ENCODE measurements at regions of chr12 and their contacts with region 1.

Region 1: DNA sequence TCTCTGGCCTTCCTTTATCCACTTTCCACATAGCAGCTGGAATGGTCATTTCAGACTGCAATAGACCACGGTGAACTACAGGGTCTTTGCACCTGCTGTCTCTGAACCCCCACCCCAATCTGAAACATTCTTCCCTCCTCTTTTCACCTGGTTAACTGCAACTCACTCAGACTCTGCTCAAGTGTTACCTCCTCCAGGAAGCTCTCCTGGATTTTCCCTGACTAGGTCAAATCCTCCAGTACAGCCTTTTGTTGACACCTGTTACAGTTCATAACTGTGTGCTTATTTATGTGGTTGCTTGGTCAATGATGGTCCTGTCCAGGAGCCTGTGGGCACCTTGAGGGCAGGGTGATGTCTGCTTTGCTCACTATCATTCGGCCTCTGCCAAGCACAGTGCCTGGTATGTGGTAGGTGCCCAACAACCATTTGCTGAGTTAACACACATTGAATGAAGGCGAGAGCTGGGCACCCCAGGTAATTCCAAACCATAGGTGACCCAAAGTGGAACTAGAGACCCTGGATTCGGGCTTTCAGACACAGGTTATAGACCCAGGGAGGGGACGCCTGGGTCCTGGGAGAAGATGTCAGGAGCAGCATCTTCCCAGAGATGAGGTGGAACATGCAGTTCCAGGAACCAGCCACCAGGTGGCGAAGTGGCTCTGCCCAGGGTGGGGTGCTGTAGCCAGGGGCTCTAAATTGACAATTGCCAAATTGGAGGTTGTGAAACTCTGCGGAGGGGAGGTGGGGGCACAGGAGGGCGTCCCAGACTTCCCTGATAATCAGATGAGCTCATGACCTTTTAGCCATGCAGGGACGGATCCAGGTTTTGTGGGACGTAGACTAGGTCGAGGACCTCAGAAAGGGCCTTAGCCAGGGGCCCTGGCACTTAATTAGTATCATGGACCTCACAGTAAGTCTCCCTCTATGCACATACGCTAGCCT is 28.1 kb downstream of the TRPV4 start:
- DNase-seq: peak; percentile 80
- ATAC-seq: peak; percentile 81
- H3K4me3 Mint-ChIP-seq: no peak overlapping the region
- H3K27ac Mint-ChIP-seq: no peak overlapping the region
- H3K4me1 Mint-ChIP-seq: no peaks in the 10 kb centered on the region
- H3K27me3 Mint-ChIP-seq: no peaks in the 10 kb centered on the region

Region 2: DNA sequence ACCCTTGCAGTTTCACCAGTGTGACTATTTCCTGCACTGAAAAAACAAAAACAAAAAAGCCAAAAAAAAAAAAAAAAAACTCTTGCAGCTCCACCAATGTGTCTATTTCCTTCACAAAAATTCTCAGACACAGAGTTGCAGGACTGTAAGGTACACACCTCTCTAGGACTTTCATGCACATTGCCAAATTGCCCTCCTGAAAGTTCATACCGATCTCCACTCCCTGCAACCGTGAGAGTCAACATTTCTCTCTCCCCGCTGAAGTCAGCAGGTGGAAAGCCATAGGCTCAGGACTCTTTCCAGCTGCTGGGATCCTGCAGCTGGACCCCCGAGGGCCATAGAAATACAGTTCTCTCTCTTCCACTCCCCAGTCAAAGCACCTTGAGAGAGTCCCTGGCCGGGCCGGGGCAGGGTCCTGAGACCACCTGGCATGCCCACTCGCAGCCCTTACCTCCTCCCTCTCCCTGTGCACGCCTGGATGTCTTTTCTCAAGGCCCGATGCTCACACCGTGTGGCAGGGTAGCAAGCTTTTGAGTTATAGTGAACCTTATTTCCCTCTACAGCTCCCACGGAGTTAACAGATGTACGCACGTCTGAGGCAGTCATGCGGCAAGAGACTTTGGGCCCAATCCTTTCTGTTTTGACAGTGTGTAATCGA is 255.3 kb before region 1 on chr12:
- CTCF ChIA-PET with region 1: no interaction called
- POLR2A ChIA-PET with region 1: no interaction called
- intact Hi-C with region 1: no loop called
- DNase-seq: no peak
- ATAC-seq: no peak
- H3K4me3 Mint-ChIP-seq: no peak overlapping the region
- H3K27ac Mint-ChIP-seq: no peak overlapping the region
- H3K4me1 Mint-ChIP-seq: peaks cover 5% of the 10 kb centered on the region
- H3K27me3 Mint-ChIP-seq: peaks cover 14% of the 10 kb centered on the region

Region 3: GRCh38 chr12:109795023-109795422 is 10.1 kb before region 1 on chr12:
- CTCF ChIA-PET with region 1: interaction called, 12 read pairs
- POLR2A ChIA-PET with region 1: no interaction called
- intact Hi-C with region 1: no loop called
- DNase-seq: no peak
- ATAC-seq: no peak
- H3K4me3 Mint-ChIP-seq: no peak overlapping the region
- H3K27ac Mint-ChIP-seq: no peak overlapping the region
- H3K4me1 Mint-ChIP-seq: no peaks in the 10 kb centered on the region
- H3K27me3 Mint-ChIP-seq: peaks cover 4% of the 10 kb centered on the region

Region 4: GRCh38 chr12:109858764-109859163 is 53.7 kb after region 1 on chr12:
- CTCF ChIA-PET with region 1: interaction called, 14 read pairs
- POLR2A ChIA-PET with region 1: no interaction called
- intact Hi-C with region 1: no loop called
- DNase-seq: no peak
- ATAC-seq: no peak
- H3K4me3 Mint-ChIP-seq: no peak overlapping the region
- H3K27ac Mint-ChIP-seq: no peak overlapping the region
- H3K4me1 Mint-ChIP-seq: peaks cover 3% of the 10 kb centered on the region
- H3K27me3 Mint-ChIP-seq: no peaks in the 10 kb centered on the region

Region 5: GRCh38 chr12:109894939-109895338 is 89.8 kb after region 1 on chr12:
- CTCF ChIA-PET with region 1: no interaction called
- POLR2A ChIA-PET with region 1: no interaction called
- intact Hi-C with region 1: no loop called
- DNase-seq: no peak
- ATAC-seq: no peak
- H3K4me3 Mint-ChIP-seq: no peak overlapping the region
- H3K27ac Mint-ChIP-seq: no peak overlapping the region
- H3K4me1 Mint-ChIP-seq: peaks cover 6% of the 10 kb centered on the region
- H3K27me3 Mint-ChIP-seq: no peaks in the 10 kb centered on the region

Region 6: GRCh38 chr12:109927622-109928021 is 122.5 kb after region 1 on chr12:
- CTCF ChIA-PET with region 1: interaction called, 5 read pairs
- POLR2A ChIA-PET with region 1: no interaction called
- intact Hi-C with region 1: loop called in 1 of 2 experiments (anchors 1 kb)
- DNase-seq: peak; percentile 67
- ATAC-seq: peak; percentile 88
- H3K4me3 Mint-ChIP-seq: no peak overlapping the region
- H3K27ac Mint-ChIP-seq: peak overlapping the region; percentile 9
- H3K4me1 Mint-ChIP-seq: no peaks in the 10 kb centered on the region
- H3K27me3 Mint-ChIP-seq: no peaks in the 10 kb centered on the region

Region 7: DNA sequence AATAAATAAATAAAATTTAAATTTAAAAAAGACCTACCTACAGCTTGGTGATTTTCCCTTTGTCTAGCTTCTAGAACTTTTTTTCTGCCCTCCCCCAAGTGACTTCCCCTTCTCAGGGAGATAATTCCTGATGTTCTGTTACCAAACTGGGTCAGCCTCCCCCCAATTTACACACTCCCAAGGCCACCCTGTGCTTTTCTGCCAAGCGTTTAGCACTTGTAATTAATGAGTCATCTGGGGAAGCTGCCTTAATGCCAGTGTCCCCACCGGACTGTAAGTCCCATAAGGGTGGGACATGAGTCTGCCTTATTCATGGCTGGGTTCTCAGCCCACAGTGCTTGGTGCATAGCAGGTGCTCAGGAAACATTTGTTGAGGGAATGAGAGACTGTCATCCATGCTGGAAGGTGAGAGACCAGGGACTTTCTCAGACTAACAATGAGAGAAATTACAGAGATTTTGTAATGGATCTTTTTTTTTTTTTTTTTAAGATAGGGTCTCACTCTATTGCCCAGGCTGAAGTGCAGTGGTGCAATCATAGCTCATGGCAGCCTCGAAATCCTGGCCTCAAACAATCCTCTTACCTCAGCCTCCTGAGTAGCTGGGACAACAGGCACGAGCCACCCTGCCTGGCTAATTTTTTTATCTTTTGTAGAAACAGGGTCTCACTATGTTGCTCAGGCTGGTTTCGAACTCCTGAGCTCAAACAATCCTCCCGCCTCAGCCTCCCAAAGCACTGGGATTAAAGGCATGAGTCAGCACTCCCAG is 1457.0 kb after region 1 on chr12:
- CTCF ChIA-PET with region 1: no interaction called
- POLR2A ChIA-PET with region 1: no interaction called
- intact Hi-C with region 1: no loop called
- DNase-seq: no peak
- ATAC-seq: no peak
- H3K4me3 Mint-ChIP-seq: no peak overlapping the region
- H3K27ac Mint-ChIP-seq: no peak overlapping the region
- H3K4me1 Mint-ChIP-seq: no peaks in the 10 kb centered on the region
- H3K27me3 Mint-ChIP-seq: peaks cover 2% of the 10 kb centered on the region